ENCODE measurements at regions of chr5 and their contacts with region 1.

Region 1: DNA sequence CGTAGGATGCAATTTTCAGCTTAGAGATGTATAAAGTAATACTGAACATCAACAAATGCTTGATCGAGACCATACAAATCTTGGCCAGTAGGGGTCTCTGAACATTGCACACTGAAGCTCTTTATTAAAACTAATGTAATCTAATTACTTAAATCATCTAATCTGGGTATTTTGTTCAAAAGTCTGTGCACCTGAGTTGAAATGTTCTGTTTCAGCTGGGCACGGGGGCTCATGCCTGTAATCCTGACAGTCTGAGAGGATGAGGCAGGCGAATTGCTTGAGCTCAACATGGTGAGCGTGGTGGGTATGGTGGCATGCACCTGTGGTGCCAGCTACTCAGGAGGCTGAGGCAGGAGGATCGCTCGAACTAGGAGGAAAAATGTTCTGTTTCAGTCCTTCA is 41.0 kb downstream of the ESM1 start:
- DNase-seq: peak in 29 of 35 experiments; percentile 4 to 79 (median 31)
- ATAC-seq: peak in 3 of 4 experiments; percentile 55 to 56 (median 56)
- H3K4me3 ChIP-seq: no peak overlapping the region
- H3K4me3 Mint-ChIP-seq: no peak overlapping the region
- H3K27ac ChIP-seq: no peak overlapping the region
- H3K27ac Mint-ChIP-seq: no peak overlapping the region
- H3K4me1 ChIP-seq: peaks cover 0 to 5% of the 10 kb centered on the region in 2 experiments
- H3K4me1 Mint-ChIP-seq: peaks cover 2 to 5% (median 3%) of the 10 kb centered on the region in 3 donors
- H3K27me3 ChIP-seq: no peaks in the 10 kb centered on the region
- H3K27me3 Mint-ChIP-seq: no peaks in the 10 kb centered on the region

Region 2: DNA sequence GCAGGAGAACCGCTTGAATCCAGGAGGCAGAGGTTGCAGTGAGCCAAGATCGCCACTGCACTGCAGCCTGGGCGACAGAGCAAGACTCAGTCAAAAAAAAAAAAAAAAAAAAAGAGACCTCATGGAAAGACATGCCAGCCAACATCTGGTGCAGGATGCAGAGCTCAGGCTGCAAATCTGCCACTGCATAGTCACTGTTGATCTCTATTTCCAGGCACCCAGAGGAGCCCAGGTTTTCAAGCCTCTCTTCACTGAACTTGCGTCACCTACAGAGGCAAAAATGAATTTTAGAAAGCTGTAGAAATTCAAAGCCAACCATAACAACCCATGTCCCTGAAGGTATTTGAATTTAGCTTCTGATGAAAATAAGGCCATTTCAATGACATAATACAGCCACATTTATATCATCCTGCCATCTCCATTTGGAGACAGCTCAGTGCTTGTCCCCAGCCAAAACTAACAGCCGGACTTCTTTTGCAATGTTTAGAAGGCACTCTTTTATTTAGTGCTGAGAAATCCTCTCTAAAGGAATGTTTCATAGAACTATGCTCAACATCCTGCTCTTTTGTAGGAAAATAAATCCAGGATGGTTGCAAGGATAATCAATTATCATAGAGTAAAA is 313.5 kb before region 1 on chr5:
- CTCF ChIA-PET with region 1: no interaction called
- POLR2A ChIA-PET with region 1: no interaction called
- DNase-seq: no peak
- ATAC-seq: no peak
- H3K4me3 ChIP-seq: no peak overlapping the region
- H3K4me3 Mint-ChIP-seq: no peak overlapping the region
- H3K27ac ChIP-seq: no peak overlapping the region
- H3K27ac Mint-ChIP-seq: no peak overlapping the region
- H3K4me1 ChIP-seq: no peaks in the 10 kb centered on the region
- H3K4me1 Mint-ChIP-seq: peaks cover 4 to 12% (median 5%) of the 10 kb centered on the region in 3 donors
- H3K27me3 ChIP-seq: no peaks in the 10 kb centered on the region
- H3K27me3 Mint-ChIP-seq: no peaks in the 10 kb centered on the region

Region 3: DNA sequence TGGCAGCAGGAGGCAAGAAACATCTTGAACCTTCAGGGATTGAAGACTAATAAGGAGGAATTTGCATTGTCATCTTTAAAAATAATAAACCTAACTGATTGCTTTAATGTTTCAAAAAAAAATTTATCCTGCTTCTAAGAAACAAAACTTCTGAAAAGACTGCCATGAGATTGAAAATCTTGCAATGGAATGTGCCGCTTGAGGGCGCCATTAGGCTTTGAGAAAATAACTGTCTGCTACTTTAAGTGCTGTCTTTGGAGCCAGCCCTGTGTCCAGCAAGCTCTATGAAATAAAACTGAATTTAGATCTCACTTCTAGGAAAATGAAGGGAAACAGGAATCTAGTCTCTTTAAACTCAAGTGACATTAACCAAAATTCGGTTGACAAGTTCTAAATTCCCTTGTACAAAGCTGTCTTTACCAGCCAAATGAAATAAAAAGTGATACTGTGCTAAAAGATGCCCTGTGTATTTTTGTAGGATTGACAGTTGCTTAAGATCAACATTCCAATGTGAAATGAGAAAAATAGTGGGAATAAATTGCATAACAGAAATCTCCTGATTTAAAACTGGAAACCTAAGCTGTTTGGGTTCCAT is 38.3 kb before region 1 on chr5:
- CTCF ChIA-PET with region 1: interaction called, 4 to 19 read pairs
- POLR2A ChIA-PET with region 1: no interaction called
- DNase-seq: peak in 33 of 35 experiments; percentile 10 to 79 (median 57)
- ATAC-seq: peak in 2 of 4 experiments; percentile 38 to 41
- H3K4me3 ChIP-seq: no peak overlapping the region
- H3K4me3 Mint-ChIP-seq: no peak overlapping the region
- H3K27ac ChIP-seq: no peak overlapping the region
- H3K27ac Mint-ChIP-seq: no peak overlapping the region
- H3K4me1 ChIP-seq: peaks cover 6 to 11% of the 10 kb centered on the region in 2 experiments
- H3K4me1 Mint-ChIP-seq: peaks cover 10 to 11% (median 11%) of the 10 kb centered on the region in 3 donors
- H3K27me3 ChIP-seq: no peaks in the 10 kb centered on the region
- H3K27me3 Mint-ChIP-seq: peaks cover 10 to 12% of the 10 kb centered on the region in 2 donors

Region 4: GRCh38 chr5:54959673-54960418 is 15.5 kb after region 1 on chr5:
- CTCF ChIA-PET with region 1: interaction called, 7 to 10 read pairs
- POLR2A ChIA-PET with region 1: interaction called in 1 of 2 experiments, 3 read pairs
- DNase-seq: peak in 6 of 35 experiments; percentile 3 to 17 (median 6)
- ATAC-seq: no peak
- H3K4me3 ChIP-seq: no peak overlapping the region
- H3K4me3 Mint-ChIP-seq: no peak overlapping the region
- H3K27ac ChIP-seq: no peak overlapping the region
- H3K27ac Mint-ChIP-seq: no peak overlapping the region
- H3K4me1 ChIP-seq: no peaks in the 10 kb centered on the region
- H3K4me1 Mint-ChIP-seq: peaks cover 5 to 15% (median 7%) of the 10 kb centered on the region in 3 donors
- H3K27me3 ChIP-seq: no peaks in the 10 kb centered on the region
- H3K27me3 Mint-ChIP-seq: peaks cover 3 to 7% of the 10 kb centered on the region in 2 donors

Region 5: GRCh38 chr5:54996466-54996865 is 52.1 kb after region 1 on chr5:
- CTCF ChIA-PET with region 1: no interaction called
- POLR2A ChIA-PET with region 1: no interaction called
- DNase-seq: no peak
- ATAC-seq: no peak
- H3K4me3 ChIP-seq: no peak overlapping the region
- H3K4me3 Mint-ChIP-seq: no peak overlapping the region
- H3K27ac ChIP-seq: no peak overlapping the region
- H3K27ac Mint-ChIP-seq: no peak overlapping the region
- H3K4me1 ChIP-seq: peaks cover 2 to 8% of the 10 kb centered on the region in 2 experiments
- H3K4me1 Mint-ChIP-seq: peaks cover 13 to 30% (median 15%) of the 10 kb centered on the region in 3 donors
- H3K27me3 ChIP-seq: no peaks in the 10 kb centered on the region
- H3K27me3 Mint-ChIP-seq: no peaks in the 10 kb centered on the region

Region 6: GRCh38 chr5:55037046-55037771 is 92.8 kb after region 1 on chr5:
- CTCF ChIA-PET with region 1: interaction called in 1 of 2 experiments, 12 read pairs
- POLR2A ChIA-PET with region 1: no interaction called
- DNase-seq: peak; percentile 21 to 76 (median 54)
- ATAC-seq: peak; percentile 92 to 99 (median 96)
- H3K4me3 ChIP-seq: no peak overlapping the region
- H3K4me3 Mint-ChIP-seq: peak overlapping the region in 1 of 3 donors; percentile 52
- H3K27ac ChIP-seq: peak overlapping the region; percentile 80
- H3K27ac Mint-ChIP-seq: peak overlapping the region; percentile 91 to 96
- H3K4me1 ChIP-seq: peaks cover 16 to 26% of the 10 kb centered on the region in 2 experiments
- H3K4me1 Mint-ChIP-seq: peaks cover 25 to 37% (median 36%) of the 10 kb centered on the region in 3 donors
- H3K27me3 ChIP-seq: no peaks in the 10 kb centered on the region
- H3K27me3 Mint-ChIP-seq: no peaks in the 10 kb centered on the region

Region 7: GRCh38 chr5:55159763-55160492 is 215.6 kb after region 1 on chr5 and contains the start of gene GPX8:
- CTCF ChIA-PET with region 1: interaction called, 13 to 42 read pairs
- POLR2A ChIA-PET with region 1: no interaction called
- DNase-seq: peak in 8 of 35 experiments; percentile 8 to 75 (median 22)
- ATAC-seq: peak; percentile 63 to 81 (median 66)
- H3K4me3 ChIP-seq: no peak within 1 kb of the TSS
- H3K4me3 Mint-ChIP-seq: no peak within 1 kb of the TSS
- H3K27ac ChIP-seq: no peak within 1 kb of the TSS
- H3K27ac Mint-ChIP-seq: no peak within 1 kb of the TSS
- H3K4me1 ChIP-seq: no peaks in the 10 kb centered on the region
- H3K4me1 Mint-ChIP-seq: no peaks in the 10 kb centered on the region
- H3K27me3 ChIP-seq: no peaks in the 10 kb centered on the region
- H3K27me3 Mint-ChIP-seq: peaks cover 21 to 32% of the 10 kb centered on the region in 2 donors
- total RNA-seq, gene GPX8: 0.20 TPM in 1 of 5 donors, not detected in the others

Measured in T-cell (primary cell).